CD4-positive, alpha-beta T cell (primary cell): ENCODE measurements at regions of chr11 and their contacts with region 1.

Region 1: DNA sequence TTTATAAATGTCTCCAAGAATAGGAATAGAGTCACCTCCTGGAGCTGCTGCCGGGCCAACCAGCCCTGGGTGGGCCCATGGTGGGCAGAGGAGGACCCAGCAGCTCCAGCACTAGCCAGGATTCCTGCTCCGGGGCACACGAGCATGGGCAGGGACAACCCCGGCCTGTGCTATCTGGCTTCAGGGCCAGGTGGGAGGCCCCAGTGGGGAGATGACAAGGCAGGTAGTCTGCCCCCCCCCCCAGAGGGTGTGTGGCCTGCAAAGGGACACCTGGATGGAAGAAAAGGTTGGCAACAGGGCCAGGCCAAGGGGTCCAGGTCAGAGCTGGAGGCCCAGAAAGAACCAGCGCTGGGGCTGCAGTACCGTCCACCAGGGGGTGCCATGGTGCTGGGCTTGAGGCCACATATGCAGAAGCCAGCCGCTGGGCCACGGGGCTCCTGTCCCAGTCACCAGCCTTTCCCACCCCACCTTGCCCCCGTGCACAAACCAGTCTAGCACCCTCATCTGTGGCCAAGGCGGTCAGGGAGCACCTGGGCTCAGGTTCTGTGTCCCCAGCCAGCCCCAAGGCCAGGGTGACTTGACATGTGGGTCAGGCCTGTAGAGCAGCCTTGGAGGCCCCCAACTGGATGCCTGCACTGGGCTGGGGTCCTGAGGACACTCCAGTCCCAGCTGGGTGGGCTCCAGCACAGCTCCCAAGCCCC is 3.5 kb downstream of the TSPAN32 start:
- DNase-seq: peak; percentile 61 to 93 (median 82)
- ATAC-seq: peak; percentile 23
- H3K4me3 ChIP-seq: peak overlapping the region; percentile 47
- H3K4me3 Mint-ChIP-seq: peak overlapping the region; percentile 80
- H3K27ac ChIP-seq: peak overlapping the region; percentile 40 to 72
- H3K27ac Mint-ChIP-seq: peak overlapping the region; percentile 94
- H3K4me1 ChIP-seq: peaks cover 71% of the 10 kb centered on the region
- H3K4me1 Mint-ChIP-seq: peaks cover 60% of the 10 kb centered on the region
- H3K27me3 ChIP-seq: no peaks in the 10 kb centered on the region
- H3K27me3 Mint-ChIP-seq: no peaks in the 10 kb centered on the region
- CTCF ChIP-seq: peak; percentile 50

Region 2: GRCh38 chr11:2208691-2209369 is 96.5 kb before region 1 on chr11:
- CTCF ChIA-PET with region 1: no interaction called
- POLR2A ChIA-PET with region 1: interaction called, 4 read pairs
- intact Hi-C with region 1: loop called in 1 of 2 experiments (anchors 10 kb)
- DNase-seq: peak in 1 of 14 experiments; percentile 27
- ATAC-seq: no peak
- H3K4me3 ChIP-seq: no peak overlapping the region
- H3K4me3 Mint-ChIP-seq: no peak overlapping the region
- H3K27ac ChIP-seq: no peak overlapping the region
- H3K27ac Mint-ChIP-seq: no peak overlapping the region
- H3K4me1 ChIP-seq: peaks cover 14% of the 10 kb centered on the region
- H3K4me1 Mint-ChIP-seq: peaks cover 7% of the 10 kb centered on the region
- H3K27me3 ChIP-seq: no peaks in the 10 kb centered on the region
- H3K27me3 Mint-ChIP-seq: no peaks in the 10 kb centered on the region
- CTCF ChIP-seq: no peak